Activated T-helper 2 cell treated with anti-CD3 and anti-CD28 coated beads, Interferon-gamma antibody, Interleukin-2, Interleukin-4, amounts not matched to agents 10 μg/mL and 5 μg/mL and 100 μg/mL, durations not matched to agents 14 hours and 24 hours and 36 hours (primary cell): ENCODE measurements at regions of chr17 and their contacts with region 1.

Region 1: DNA sequence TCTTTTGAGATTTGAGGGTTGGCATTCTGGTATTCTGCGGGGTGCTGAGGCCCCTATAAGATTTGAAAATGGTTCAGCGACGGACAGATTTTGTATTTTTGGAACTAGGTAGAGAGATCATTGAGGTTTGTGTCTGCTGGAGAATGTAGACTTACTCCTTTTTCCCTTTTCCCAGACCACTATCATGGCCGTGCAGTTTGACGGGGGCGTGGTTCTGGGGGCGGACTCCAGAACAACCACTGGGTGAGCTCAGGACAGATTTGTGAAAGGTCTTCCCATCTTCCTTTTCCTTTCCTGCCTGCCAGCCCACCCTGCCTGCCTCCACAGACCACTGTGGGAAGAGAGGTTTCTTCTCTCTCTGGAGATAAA is 573 bp downstream of the PSMB6 start:
- DNase-seq: no peak
- H3K4me3 Mint-ChIP-seq: peak overlapping the region; percentile 100
- H3K27ac Mint-ChIP-seq: peak overlapping the region; percentile 95
- H3K4me1 Mint-ChIP-seq: peaks cover 9% of the 10 kb centered on the region
- H3K27me3 Mint-ChIP-seq: peaks cover 2% of the 10 kb centered on the region

Region 2: DNA sequence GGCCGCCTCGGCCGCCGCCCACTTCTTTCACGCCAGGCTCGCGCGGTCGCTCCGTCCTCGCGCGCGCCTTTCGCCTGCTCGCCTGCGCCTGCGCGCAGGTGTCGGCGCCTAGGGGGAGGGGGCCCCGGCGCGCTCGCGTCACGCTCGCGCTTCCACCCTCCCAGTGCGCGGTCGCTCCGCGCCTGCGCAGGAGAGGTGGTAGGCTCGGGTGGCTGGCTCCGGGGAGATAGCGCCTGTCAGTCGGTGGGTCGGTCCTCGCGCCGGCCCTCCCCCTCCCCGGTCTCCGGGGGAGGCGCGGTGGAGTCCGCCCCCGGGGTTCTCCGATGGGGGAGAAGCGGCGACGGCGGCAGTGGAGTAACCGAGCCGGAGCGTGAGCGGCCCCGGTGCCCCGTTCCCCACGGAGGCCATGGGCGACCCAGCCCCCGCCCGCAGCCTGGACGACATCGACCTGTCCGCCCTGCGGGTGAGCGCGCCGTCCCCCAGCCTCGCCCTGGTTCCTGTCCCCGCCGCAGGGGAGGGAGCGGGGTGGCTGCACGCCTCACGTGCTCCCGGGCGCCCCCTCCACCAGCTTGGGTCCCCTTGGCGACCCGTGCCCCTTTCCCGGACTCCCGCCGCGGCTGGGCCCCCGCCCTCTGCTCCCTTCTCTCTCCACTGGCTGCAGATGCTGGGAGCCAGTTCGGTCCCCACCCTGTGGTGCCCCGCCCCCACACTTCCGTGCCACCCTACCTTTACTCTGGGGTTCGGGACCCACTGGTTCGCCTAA is 36.8 kb after region 1 on chr17 and contains the start of gene MINK1:
- intact Hi-C with region 1: loop called (anchors 2 kb)
- DNase-seq: peak; percentile 87
- H3K4me3 Mint-ChIP-seq: peak within 1 kb of the TSS; percentile 90
- H3K27ac Mint-ChIP-seq: peak within 1 kb of the TSS; percentile 86
- H3K4me1 Mint-ChIP-seq: peaks cover 25% of the 10 kb centered on the region
- H3K27me3 Mint-ChIP-seq: no peaks in the 10 kb centered on the region
- total RNA-seq, gene MINK1: 60.9 and 69.7 TPM in 2 replicates